K562 (cell line): ENCODE measurements at regions of chr19 and their contacts with region 1.

Region 1: GRCh38 chr19:15555759-15556633 is 47.7 kb downstream of the CYP4F22 start:
- DNase-seq: peak; percentile 95 to 96 (median 96)
- ATAC-seq: peak; percentile 99
- H3K4me3 ChIP-seq: peak overlapping the region; percentile 26
- H3K27ac ChIP-seq: no peak overlapping the region
- H3K4me1 ChIP-seq: peaks cover 5 to 20% of the 10 kb centered on the region in 2 experiments; a peak in 3 of 5 replicates
- H3K27me3 ChIP-seq: peaks cover 2 to 16% of the 10 kb centered on the region in 2 experiments; a peak in 3 of 5 replicates
- CTCF ChIP-seq: peak; percentile 81 to 95 (median 90)
- EP300 ChIP-seq: no peak
- POLR2A ChIP-seq: no peak
- RAD21 ChIP-seq: peak; percentile 72 to 87

Region 2: DNA sequence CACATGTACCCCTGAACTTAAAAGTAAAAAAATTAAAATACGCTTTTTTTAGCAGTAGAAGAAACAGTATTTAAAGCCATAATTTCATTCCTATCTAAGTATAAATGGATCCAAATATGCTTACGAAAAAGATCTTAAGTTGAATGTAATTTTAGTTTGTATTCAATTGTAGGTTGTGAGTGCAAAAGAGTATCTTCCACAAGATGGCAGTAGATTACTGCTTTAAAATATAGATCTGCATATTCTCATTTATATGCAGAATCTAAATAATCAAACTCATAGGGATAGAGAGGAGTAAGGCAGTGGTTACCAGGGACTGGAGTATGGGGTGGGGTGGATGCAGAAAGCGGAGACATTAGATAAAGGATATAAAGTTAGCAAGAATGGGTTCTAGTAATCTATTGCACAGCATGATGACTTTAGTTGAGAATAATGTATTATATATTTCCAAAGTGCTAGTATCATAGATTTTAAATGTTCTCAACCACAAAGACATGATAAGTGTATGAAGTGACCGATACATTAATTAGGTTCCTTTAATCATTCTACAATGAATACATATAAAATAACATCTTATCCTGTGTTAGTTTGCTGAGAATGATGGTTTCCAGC is 684.3 kb before region 1 on chr19:
- CTCF ChIA-PET with region 1: no interaction called
- POLR2A ChIA-PET with region 1: no interaction called
- in situ Hi-C with region 1: loop called (anchors 25 kb)
- intact Hi-C with region 1: no loop called
- DNase-seq: peak; percentile 21 to 29 (median 28)
- ATAC-seq: 0 out of 3 replicates have a peak, but pooled peaks have one; percentile 27
- H3K4me3 ChIP-seq: no peak overlapping the region
- H3K27ac ChIP-seq: no peak overlapping the region
- H3K4me1 ChIP-seq: no peaks in the 10 kb centered on the region
- H3K27me3 ChIP-seq: 0 out of 5 replicates have a peak, but pooled peaks cover 0 to 3% of the 10 kb centered on the region in 2 experiments
- CTCF ChIP-seq: peak; percentile 33 to 76 (median 40); a peak in 4 of 6 replicates
- EP300 ChIP-seq: no peak
- POLR2A ChIP-seq: no peak
- RAD21 ChIP-seq: peak; percentile 61 to 76

Region 3: DNA sequence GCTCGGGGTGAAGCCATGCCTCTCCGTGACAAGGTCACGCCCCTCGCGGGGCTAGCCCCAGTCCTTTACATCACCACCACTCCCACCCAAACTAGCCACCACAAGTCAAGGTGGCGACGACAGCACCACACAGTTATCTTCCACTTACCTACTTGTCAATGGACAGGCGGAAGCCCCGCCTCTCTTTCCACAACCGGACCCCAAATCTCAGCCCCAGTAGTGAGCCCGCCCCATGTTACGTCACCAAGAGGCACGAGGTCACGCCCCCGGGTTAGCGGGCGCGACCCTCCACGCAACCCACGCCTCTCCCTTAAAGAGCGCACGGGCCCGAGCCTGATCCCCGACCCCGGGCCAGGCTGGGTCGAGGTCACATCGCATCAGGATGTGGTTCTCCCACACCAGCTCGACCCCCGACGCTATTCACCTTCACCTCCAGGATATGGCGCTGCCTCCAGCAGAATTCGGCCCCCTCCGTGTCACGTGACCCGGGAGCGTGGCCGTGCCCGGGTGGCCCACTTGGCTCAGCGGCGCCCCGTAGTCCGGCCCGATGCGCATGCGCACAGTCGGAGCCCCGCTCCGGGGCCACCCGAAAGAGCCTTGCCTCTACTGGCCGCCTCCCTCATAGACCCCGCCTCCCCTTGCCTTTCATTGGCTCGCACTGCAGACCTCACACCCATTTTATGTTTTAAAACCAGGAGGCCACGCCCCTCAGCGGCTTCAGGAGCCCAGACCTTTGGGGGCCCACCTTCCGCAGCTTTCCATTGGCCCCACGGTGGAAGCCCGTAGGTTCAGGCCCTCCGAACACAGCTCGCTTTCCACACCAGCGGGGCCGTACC is 430.5 kb before region 1 on chr19:
- CTCF ChIA-PET with region 1: no interaction called
- POLR2A ChIA-PET with region 1: no interaction called
- in situ Hi-C with region 1: no loop called
- intact Hi-C with region 1: no loop called
- DNase-seq: peak; percentile 97 to 98 (median 98)
- ATAC-seq: peak; percentile 97
- H3K4me3 ChIP-seq: peak overlapping the region; percentile 52
- H3K27ac ChIP-seq: peak overlapping the region; percentile 75
- H3K4me1 ChIP-seq: peaks cover 5 to 28% of the 10 kb centered on the region in 2 experiments; a peak in 4 of 5 replicates
- H3K27me3 ChIP-seq: peaks cover 5% of the 10 kb centered on the region in 2 experiments; a peak in 1 of 5 replicates
- CTCF ChIP-seq: peak in 1 of 3 experiments; percentile 11; a peak in 1 of 6 replicates
- EP300 ChIP-seq: no peak
- POLR2A ChIP-seq: peak; percentile 67; the same call in 1 of the 2 replicates
- RAD21 ChIP-seq: no peak

Region 4: GRCh38 chr19:15154002-15154612 is 401.9 kb before region 1 on chr19:
- CTCF ChIA-PET with region 1: interaction called, 19 read pairs
- POLR2A ChIA-PET with region 1: no interaction called
- in situ Hi-C with region 1: no loop called
- intact Hi-C with region 1: loop called (anchors 5 kb)
- DNase-seq: peak; percentile 58 to 72 (median 68)
- ATAC-seq: peak; percentile 75
- H3K4me3 ChIP-seq: no peak overlapping the region
- H3K27ac ChIP-seq: no peak overlapping the region
- H3K4me1 ChIP-seq: no peaks in the 10 kb centered on the region
- H3K27me3 ChIP-seq: peaks cover 0 to 4% of the 10 kb centered on the region in 2 experiments; a peak in 1 of 5 replicates
- CTCF ChIP-seq: peak; percentile 68 to 76 (median 69)
- EP300 ChIP-seq: no peak
- POLR2A ChIP-seq: no peak
- RAD21 ChIP-seq: peak; percentile 26 to 69; a peak in 2 of 4 replicates

Region 5: GRCh38 chr19:15177269-15178116 is 378.5 kb before region 1 on chr19:
- CTCF ChIA-PET with region 1: interaction called, 33 read pairs
- POLR2A ChIA-PET with region 1: interaction called, 3 read pairs
- in situ Hi-C with region 1: no loop called
- intact Hi-C with region 1: loop called (anchors 5 kb)
- DNase-seq: peak; percentile 76 to 87 (median 82)
- ATAC-seq: peak; percentile 78
- H3K4me3 ChIP-seq: peak overlapping the region; percentile 4; the same call in 1 of the 2 replicates
- H3K27ac ChIP-seq: no peak overlapping the region
- H3K4me1 ChIP-seq: peaks cover 4 to 43% of the 10 kb centered on the region in 2 experiments; a peak in 4 of 5 replicates
- H3K27me3 ChIP-seq: no peaks in the 10 kb centered on the region; a peak in 1 of 5 replicates
- CTCF ChIP-seq: peak; percentile 83 to 96 (median 93)
- EP300 ChIP-seq: no peak
- POLR2A ChIP-seq: no peak
- RAD21 ChIP-seq: peak; percentile 79 to 93

Region 6: DNA sequence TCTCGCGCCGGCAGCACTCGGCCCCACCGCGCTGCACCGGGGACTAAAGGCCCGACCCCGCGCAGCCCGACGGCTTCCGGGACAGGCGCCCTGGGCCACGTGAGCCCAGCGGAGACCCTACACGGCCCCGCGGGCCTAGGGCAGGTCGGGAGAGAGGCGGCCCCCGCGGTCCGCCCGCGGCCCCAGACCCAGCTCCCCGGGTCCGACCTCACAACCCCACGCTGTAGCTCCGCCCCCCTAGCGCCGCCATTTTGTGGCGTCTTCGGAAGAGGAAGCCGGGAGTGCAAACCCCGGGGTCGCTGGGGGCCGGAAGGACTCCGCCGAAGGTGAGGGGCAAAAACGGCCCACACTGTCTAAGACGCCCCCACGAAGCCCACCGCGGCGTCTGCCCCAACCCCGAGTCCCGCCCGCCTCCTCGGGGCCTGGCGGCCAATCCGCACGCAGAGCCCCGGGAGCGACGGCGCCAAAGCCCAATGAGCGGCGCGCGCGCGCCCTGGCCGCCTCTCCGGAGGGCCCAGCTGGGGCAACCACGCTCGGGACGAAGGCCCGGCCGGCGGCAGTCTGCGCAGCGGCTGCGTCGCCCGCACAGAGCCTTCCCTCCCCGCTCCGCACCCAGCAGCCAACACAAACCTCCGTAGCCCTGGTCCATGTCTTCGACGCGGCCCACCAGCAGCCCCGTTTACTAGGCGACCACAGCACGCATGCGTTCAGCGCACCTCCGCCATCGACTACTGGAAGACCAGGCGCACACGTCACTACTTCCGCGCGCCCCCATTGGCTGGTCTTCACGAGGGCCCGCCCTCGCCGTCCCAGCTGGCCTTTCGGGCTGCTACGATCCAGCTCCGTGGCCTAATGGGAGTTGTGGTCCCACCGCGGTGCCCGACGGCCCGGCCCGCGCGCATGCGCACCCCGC is 176.7 kb before region 1 on chr19 and contains the start of gene AKAP8:
- CTCF ChIA-PET with region 1: no interaction called
- POLR2A ChIA-PET with region 1: interaction called, 5 read pairs
- in situ Hi-C with region 1: no loop called
- intact Hi-C with region 1: loop called (anchors 2 kb)
- DNase-seq: peak; percentile 97 to 99 (median 98)
- ATAC-seq: peak; percentile 91
- H3K4me3 ChIP-seq: peak within 1 kb of the TSS; percentile 90
- H3K27ac ChIP-seq: peak within 1 kb of the TSS; percentile 89
- H3K4me1 ChIP-seq: peaks cover 16 to 37% of the 10 kb centered on the region in 2 experiments
- H3K27me3 ChIP-seq: no peaks in the 10 kb centered on the region; a peak in 1 of 5 replicates
- CTCF ChIP-seq: no peak
- EP300 ChIP-seq: no peak
- POLR2A ChIP-seq: peak; percentile 93
- RAD21 ChIP-seq: no peak
- polyA plus RNA-seq, gene AKAP8: 3.4 to 4.4 TPM

Region 7: GRCh38 chr19:15538774-15539173 is 17.2 kb before region 1 on chr19:
- CTCF ChIA-PET with region 1: no interaction called
- POLR2A ChIA-PET with region 1: no interaction called
- in situ Hi-C with region 1: no loop called
- intact Hi-C with region 1: no loop called
- DNase-seq: peak in 1 of 4 experiments; percentile 20
- ATAC-seq: no peak
- H3K4me3 ChIP-seq: no peak overlapping the region
- H3K27ac ChIP-seq: no peak overlapping the region
- H3K4me1 ChIP-seq: peaks cover 0 to 3% of the 10 kb centered on the region in 2 experiments; a peak in 2 of 5 replicates
- H3K27me3 ChIP-seq: peaks cover 0 to under 1% of the 10 kb centered on the region in 2 experiments; a peak in 2 of 5 replicates
- CTCF ChIP-seq: no peak
- EP300 ChIP-seq: no peak
- POLR2A ChIP-seq: no peak
- RAD21 ChIP-seq: no peak

Region 8: GRCh38 chr19:15584541-15585115 is 28.6 kb after region 1 on chr19:
- CTCF ChIA-PET with region 1: no interaction called
- POLR2A ChIA-PET with region 1: no interaction called
- in situ Hi-C with region 1: no loop called
- intact Hi-C with region 1: no loop called
- DNase-seq: peak; percentile 79 to 83 (median 82)
- ATAC-seq: peak; percentile 100
- H3K4me3 ChIP-seq: no peak overlapping the region
- H3K27ac ChIP-seq: no peak overlapping the region
- H3K4me1 ChIP-seq: peaks cover 0 to 6% of the 10 kb centered on the region in 2 experiments; a peak in 1 of 5 replicates
- H3K27me3 ChIP-seq: peaks cover 3 to 19% of the 10 kb centered on the region in 2 experiments; a peak in 3 of 5 replicates
- CTCF ChIP-seq: peak; percentile 92 to 99 (median 98)
- EP300 ChIP-seq: no peak
- POLR2A ChIP-seq: no peak
- RAD21 ChIP-seq: peak; percentile 64 to 88

Region 9: DNA sequence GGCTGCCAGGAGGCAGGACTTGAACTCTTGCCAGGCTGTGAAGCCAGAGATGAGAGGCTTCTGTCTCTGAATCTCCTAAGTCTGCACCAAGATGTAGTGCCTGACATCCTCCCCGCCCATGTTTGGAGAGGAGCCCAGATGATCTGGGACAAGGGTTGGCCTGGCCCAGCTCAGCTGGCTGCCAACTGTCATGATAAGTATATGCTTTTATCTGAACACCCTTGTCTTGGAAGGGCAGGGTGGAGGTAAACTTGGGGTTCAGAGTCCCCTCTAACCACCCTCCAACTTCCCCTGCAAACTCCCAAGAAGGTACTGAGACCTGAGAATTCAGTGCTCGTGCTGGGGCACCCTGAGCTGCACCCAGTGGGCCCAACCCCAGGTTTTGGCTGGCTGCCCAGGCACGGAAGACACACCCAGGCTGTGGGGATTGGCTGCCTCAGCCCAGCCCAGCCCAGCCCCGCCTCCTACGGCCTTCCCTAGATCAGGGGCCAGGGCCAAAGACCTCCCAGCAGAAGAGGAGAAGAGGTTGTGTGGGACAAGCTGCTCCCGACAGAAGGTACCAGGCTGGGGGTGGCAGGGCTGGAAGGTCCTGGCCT is 116.7 kb after region 1 on chr19 and contains the start of gene CYP4F12:
- CTCF ChIA-PET with region 1: no interaction called
- POLR2A ChIA-PET with region 1: no interaction called
- in situ Hi-C with region 1: no loop called
- intact Hi-C with region 1: no loop called
- DNase-seq: peak; percentile 40 to 62 (median 58)
- ATAC-seq: peak; percentile 96
- H3K4me3 ChIP-seq: no peak within 1 kb of the TSS
- H3K27ac ChIP-seq: no peak within 1 kb of the TSS
- H3K4me1 ChIP-seq: peaks cover 0 to 7% of the 10 kb centered on the region in 2 experiments; a peak in 2 of 5 replicates
- H3K27me3 ChIP-seq: no peaks in the 10 kb centered on the region
- CTCF ChIP-seq: no peak
- EP300 ChIP-seq: no peak
- POLR2A ChIP-seq: no peak
- RAD21 ChIP-seq: no peak
- polyA plus RNA-seq, gene CYP4F12: not detected